Head of caudate nucleus (tissue), 42 donors: ENCODE measurements at regions of chr1 and their contacts with region 1.

Region 1: DNA sequence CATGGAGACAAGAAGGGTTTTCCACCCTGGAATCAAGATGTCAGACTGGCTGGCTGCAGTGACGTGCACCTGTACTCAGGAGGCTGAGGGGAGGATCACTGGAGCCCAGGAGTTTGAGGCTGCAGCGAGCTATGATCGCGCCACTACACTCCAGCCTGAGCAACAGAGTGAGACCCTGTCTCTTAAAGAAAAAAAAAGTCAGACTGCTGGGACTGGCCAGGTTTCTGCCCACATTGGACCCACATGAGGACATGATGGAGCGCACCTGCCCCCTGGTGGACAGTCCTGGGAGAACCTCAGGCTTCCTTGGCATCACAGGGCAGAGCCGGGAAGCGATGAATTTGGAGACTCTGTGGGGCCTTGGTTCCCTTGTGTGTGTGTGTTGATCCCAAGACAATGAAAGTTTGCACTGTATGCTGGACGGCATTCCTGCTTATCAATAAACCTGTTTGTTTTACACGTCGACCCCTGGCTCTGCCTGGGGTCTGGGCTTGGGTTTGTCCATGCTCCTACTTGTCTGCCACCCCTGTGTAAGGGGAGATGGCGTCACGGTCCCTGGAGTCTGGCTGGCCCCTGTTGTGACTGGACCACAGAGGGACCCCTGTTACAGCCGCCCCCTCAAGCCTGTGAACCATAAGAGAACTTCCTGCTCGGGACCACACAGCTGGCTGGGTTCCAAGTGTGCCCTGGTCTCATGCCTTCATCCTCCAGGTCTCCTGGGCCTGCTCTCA is 20.9 kb upstream of the VPS13D start:
- DNase-seq: peak; percentile 59 to 96 (median 90)

Region 2: DNA sequence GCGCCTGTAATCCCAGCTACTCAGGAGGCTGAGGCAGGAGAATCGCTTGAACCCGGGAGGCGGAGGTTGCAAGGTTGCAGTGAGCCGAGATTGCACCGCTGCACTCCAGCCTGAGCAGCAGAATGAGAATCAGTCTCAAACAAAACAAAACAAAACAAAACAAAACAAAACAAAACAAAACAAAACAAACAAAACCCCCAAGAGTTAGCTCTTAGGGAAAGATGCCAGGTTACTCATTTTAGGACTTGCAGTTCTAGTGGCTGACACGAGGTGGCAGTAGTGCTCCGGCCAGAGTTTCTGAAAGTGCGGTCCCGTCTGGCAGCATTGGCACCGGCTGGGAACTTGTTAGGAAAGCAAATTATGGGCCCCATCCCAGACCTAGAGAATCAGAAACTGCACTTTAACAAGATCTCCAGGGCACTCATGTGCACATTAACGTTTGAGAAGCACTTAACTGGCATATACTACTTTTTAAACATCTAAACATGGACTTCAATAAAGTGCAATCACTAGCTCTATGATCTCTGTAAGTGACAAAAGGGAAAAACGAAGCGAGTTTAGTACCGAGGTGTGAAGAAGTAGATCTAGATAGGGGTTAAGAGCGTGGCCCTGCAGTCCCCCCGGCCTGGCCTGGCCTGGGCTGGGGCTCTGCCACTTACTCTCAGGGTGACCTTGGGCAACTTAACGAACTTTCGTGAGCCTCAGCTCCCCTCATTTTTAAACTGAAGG is 84.1 kb before region 1 on chr1:
- intact Hi-C with region 1: loop called (anchors 5 kb)
- DNase-seq: peak; percentile 54 to 90 (median 78)